MCF 10A (cell line): ENCODE measurements at regions of chr11 and their contacts with region 1.

Region 1: DNA sequence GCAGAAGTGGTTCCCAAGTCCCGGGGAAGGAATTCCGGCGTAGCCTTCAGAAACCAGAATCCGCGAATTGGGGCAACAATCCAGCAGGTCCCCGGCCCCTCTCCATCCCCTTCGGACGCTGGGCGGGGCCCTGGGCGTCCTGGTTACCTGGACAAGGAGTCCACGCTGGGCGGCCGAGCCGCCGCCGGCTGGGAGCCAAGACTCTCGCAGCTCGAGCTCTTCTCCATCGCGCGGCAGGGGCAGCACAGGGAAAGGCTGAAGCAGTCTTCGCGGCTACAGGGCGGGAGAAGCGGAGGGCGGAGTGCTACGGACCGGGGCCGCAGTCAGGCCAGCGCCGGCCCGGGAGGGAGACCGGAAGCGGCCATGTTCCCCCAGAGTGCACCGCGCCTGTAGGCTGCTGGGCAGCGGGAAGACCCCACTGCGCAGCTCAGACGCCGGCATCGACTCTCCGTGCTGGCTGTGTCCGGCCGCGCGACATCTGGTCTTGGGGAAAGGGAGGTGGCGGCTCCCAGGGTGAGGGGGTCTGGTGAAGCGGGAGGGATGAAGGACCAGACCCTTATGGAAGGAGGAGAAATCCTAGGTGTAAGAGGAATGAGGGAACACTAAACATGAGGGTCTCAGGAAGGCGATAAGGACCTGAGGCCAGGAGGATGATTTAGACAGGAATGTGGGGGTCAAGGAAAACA is at the start of gene MTMR2:
- DNase-seq: peak; percentile 64
- H3K4me3 Mint-ChIP-seq: peak within 1 kb of the TSS; percentile 84
- H3K27ac Mint-ChIP-seq: peak within 1 kb of the TSS; percentile 95
- H3K4me1 Mint-ChIP-seq: peaks cover 21% of the 10 kb centered on the region
- H3K27me3 Mint-ChIP-seq: no peaks in the 10 kb centered on the region
- CTCF ChIP-seq: no peak
- total RNA-seq, gene MTMR2: 49.8 and 51.9 TPM in 2 replicates

Region 2: DNA sequence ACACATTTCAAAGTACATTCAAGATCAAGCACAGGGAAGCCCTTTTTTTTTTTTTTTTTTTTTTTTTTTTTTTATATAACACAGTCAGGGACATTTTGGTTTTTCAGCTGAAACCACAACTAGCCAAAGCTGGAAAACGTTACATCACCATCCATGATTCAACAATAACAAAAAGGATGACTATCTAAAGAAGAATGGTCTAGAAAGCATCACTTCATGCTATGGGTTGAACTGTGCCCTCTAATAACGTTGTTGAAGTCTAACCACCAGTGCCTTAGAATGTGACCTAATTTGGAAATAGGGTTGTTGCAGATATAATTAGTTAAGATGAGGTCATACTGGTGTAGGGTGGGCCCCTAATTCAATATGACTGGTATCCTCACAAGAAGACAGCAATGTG is 46.6 kb before region 1 on chr11:
- CTCF ChIA-PET with region 1: interaction called, 3 read pairs
- POLR2A ChIA-PET with region 1: interaction called, 4 read pairs
- intact Hi-C with region 1: loop called (anchors 5 kb)
- DNase-seq: peak; percentile 80
- H3K4me3 Mint-ChIP-seq: no peak overlapping the region
- H3K27ac Mint-ChIP-seq: no peak overlapping the region
- H3K4me1 Mint-ChIP-seq: peaks cover 12% of the 10 kb centered on the region
- H3K27me3 Mint-ChIP-seq: no peaks in the 10 kb centered on the region
- CTCF ChIP-seq: no peak

Region 3: GRCh38 chr11:95912902-95913560 is 10.8 kb before region 1 on chr11:
- CTCF ChIA-PET with region 1: no interaction called
- POLR2A ChIA-PET with region 1: interaction called, 37 read pairs
- intact Hi-C with region 1: no loop called
- DNase-seq: peak; percentile 63
- H3K4me3 Mint-ChIP-seq: peak overlapping the region; percentile 50
- H3K27ac Mint-ChIP-seq: peak overlapping the region; percentile 92
- H3K4me1 Mint-ChIP-seq: peaks cover 53% of the 10 kb centered on the region
- H3K27me3 Mint-ChIP-seq: no peaks in the 10 kb centered on the region
- CTCF ChIP-seq: no peak

Region 4: DNA sequence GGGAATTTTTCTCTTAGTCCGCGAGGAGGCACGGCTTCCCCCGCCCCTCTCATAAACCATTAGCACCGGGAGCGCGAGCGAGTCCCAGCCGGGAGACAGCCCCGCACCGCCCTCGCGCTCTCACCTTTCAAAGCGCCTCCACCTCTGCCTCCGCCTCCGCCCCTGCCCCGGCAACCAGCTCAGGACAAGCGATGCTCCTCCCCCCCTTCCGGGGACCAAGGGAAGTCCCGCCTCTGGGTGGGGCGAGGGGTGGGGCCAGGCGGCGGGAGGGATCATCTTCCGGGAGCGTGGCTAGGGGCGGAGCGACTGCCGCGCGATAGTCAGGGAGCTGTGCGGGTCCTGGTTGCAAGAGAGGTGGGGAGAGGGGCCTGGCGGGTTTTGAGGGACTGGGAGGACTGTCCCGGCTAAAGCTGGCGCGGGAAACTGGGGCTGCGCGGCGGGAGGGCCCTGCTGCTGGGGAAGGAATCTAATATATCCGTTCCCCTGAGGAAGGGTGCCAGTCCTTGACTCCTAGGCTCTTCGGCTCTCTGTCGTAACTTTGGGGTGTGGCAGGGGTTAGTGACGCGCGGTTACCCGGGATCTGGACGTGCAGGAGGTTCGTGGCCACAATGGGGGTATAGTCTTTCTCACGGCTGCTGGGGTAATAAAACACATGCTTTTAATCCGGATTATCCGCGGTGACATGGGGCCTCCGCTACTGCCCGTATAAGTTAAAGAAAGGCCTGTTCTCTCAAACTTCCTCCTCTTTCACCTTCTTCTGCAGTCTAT is 466.0 kb after region 1 on chr11 and contains the starts of genes CCDC82 and JRKL:
- CTCF ChIA-PET with region 1: interaction called, 3 read pairs
- POLR2A ChIA-PET with region 1: interaction called, 17 read pairs
- intact Hi-C with region 1: loop called (anchors 2 kb)
- DNase-seq: peak; percentile 98
- H3K4me3 Mint-ChIP-seq: peak within 1 kb of the TSS; percentile 77
- H3K27ac Mint-ChIP-seq: peak within 1 kb of the TSS; percentile 93
- H3K4me1 Mint-ChIP-seq: peaks cover 11% of the 10 kb centered on the region
- H3K27me3 Mint-ChIP-seq: no peaks in the 10 kb centered on the region
- CTCF ChIP-seq: no peak
- total RNA-seq, gene CCDC82: 15.8 and 21.4 TPM in 2 replicates
- total RNA-seq, gene JRKL: 11.5 and 16.3 TPM in 2 replicates